ENCODE measurements at regions of chr17 and their contacts with region 1.

Region 1: DNA sequence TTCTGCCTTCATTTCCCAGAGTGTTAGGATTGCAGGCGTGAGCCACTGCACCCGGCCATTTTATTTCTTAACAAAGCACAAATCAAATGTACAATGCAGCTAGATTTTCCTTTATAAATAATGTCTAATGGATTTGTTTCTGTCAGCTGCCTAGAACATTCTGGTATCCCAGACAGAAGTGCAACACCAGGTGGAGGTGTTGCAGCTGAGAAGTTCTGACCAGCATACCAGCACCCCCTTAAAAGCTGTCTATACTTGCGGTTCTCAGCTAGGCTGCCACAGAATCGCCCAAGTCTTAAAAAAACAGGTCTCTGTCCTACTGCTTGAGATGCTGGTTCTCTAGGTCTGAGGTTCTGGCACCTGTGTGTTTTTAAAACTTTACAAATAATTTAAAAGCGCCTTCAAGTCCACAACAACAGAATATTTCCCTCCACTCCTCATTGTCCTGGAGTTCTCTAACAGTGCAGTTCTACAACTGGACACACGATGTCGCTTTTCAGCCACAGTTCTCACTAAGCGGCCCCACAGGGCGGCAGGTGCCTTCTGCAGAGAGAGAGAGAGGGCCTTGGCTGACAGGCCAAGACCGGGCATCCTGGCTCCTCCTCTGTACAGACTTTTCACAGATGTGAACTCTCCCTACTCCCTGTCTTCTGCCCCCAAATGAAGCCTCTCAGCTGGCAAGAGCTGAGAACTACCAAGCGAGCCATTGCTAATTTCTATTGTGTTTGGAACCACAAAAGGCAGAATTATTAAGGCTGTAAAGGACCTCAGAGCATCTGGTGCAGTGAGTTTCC is 32.6 kb upstream of the MEOX1 start:
- DNase-seq: peak; percentile 76
- H3K27ac ChIP-seq: no peak overlapping the region
- CTCF ChIP-seq: peak; percentile 88

Region 2: DNA sequence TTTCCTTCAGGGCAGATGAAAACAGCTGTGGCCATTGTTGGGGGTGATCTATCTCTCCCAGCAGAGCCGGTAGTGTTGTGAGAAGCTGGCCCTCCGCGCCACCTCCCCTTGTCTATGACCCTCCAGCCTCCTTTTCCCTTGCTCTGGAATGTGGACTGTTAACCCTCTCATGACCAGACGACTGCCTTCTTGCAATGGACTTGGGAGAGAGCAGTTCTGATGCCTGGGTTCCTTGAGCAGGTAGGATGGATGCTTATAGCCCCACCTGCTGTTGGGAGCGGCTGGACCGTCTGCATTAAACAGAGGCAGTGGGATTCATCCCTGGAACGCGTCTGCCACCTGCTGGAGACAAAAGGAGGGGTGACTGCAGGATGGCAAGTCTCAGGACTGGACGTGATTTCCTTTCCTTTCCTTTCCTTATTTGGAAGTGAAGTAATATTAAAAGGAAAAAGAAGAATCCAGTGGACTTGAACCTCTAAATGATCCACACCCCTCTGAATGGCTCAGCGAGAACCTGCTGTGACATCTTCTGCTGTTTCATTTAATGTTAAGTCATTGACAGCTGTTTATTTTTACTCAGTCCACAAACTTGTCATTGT is 66.1 kb after region 1 on chr17:
- CTCF ChIA-PET with region 1: interaction called, 181 read pairs
- POLR2A ChIA-PET with region 1: no interaction called
- DNase-seq: peak; percentile 96
- H3K27ac ChIP-seq: peak overlapping the region; percentile 43
- CTCF ChIP-seq: peak; percentile 98